ENCODE measurements at regions of chr16 and their contacts with region 1.

Region 1: DNA sequence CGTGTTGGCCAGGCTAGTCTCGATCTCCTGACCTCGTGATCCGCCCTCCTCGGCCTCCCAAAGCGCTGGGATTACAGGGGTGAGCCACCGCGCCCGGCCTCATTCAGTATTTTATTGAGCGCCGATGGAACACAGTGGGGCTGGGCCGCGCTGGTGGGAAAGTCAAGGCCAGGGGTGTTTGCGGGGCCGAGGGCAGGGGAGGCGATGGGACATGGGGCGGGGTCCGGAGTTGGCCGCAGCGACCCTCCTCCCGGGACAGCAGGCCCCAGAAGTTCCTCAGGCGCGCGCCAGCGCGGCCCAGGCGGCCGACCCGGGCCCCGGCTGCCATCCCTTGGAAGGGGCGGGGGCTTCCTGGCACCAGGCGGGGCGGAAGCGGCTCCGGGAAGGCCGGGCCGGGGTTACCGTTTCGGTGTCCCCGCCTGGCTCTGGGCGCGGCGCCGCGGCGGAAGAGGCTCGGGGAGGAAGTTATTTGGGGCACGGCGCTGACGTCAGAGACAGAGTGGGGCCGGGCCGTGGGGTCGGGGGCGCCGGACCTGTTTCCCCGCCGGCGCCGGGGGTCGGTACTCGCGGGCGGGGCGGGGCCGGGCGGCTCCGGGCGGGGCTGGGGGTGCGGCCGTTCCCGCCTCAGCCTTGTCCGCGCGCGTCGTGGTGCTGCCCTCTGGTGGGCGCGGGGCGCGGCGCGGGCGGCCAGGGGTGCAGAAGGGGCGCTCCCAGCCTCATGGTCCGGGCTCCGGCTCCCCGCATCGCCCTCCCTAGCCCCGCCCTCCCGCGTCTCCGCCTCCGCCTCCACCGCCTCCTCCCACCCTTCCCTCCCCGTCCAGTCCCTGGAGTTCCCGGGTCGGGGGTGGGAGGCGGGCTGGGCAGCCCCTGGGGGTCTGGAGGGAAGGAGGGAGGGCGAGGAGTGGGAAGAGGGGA is 952 bp upstream of the PRSS27 start:
- DNase-seq: peak; percentile 93
- H3K4me3 Mint-ChIP-seq: peak overlapping the region; percentile 75
- H3K27ac Mint-ChIP-seq: peak overlapping the region; percentile 67
- H3K4me1 Mint-ChIP-seq: peaks cover 2% of the 10 kb centered on the region
- H3K27me3 Mint-ChIP-seq: peaks cover 4% of the 10 kb centered on the region

Region 2: DNA sequence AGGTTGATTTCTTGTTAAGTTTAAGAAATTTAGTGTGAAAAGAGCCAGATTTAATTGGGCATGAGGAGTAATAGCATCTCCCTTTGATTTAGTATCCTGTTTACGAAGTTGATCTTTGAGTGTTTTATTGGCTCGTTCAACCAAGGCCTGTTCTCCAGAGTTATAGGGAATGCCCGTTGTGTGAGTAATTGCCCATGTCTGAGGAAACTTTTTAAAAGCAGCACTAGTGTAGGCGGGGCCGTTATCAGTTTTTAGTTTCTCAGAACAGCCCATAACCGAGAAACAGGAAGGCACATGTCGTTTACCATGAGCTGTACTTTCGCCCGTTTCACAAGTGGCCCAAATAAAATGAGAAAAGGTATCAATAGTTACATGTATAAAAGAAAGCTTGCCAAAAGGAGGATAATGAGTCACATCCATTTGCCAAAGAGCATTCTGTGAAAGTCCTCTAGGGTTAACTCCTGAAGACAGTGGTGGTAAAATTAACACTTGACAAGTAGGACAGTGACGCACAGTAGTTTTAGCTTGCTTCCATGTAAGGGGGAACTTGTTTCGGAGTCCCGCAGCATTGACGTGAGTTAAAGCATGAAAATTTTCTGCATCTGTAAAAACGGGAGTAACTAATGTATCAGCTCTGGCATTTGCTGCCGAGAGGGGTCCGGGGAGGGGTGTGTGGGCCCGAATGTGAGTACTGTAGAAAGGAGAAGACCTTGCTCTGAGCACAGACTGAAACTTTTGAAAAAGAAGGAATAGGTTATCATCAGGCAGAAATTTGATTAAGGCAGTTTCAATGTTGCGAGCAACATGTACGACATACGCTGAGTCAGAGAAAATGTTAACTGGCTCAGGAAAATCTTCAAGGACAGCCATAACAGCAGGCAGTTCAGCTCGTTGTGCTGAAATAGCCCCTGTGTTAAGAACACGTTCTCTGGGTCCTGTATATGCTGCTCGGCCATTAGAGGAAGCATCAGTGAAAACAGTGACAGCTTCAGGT is 57.1 kb before region 1 on chr16:
- CTCF ChIA-PET with region 1: no interaction called
- POLR2A ChIA-PET with region 1: interaction called, 3 read pairs
- intact Hi-C with region 1: loop called (anchors 10 kb)
- DNase-seq: peak; percentile 87
- H3K4me3 Mint-ChIP-seq: peak overlapping the region; percentile 88
- H3K27ac Mint-ChIP-seq: peak overlapping the region; percentile 98
- H3K4me1 Mint-ChIP-seq: peaks cover 79% of the 10 kb centered on the region
- H3K27me3 Mint-ChIP-seq: no peaks in the 10 kb centered on the region

Region 3: DNA sequence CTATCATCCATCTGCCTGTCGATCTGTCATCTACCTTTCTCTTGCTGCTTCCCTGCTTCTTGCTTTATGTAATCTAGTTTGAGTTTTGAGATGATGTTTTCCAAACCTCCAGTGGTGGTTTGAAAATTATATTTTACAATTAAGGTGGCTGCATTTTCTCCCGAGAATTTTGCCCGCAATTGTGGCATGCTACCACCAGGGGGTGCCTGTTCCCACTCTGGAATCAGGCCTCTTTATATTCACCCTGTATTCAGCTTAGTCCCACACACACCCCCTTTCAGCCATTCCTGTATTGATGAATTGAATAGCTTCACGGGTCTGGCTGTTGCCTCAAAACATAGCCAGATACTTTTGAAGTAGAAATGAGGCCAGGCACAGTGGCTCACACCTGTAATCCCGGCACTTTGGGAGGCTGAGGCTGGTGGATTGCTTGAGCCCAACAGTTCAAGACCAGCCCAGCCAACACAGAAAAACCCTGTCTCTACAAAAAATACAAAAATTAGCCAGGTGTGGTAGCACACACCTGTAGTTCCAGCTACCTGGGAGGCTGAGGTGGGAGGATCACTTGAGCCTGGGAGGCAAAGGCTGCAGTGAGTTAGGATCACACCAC is 133.8 kb after region 1 on chr16:
- CTCF ChIA-PET with region 1: no interaction called
- POLR2A ChIA-PET with region 1: no interaction called
- intact Hi-C with region 1: no loop called
- DNase-seq: peak; percentile 35
- H3K4me3 Mint-ChIP-seq: no peak overlapping the region
- H3K27ac Mint-ChIP-seq: no peak overlapping the region
- H3K4me1 Mint-ChIP-seq: peaks cover 5% of the 10 kb centered on the region
- H3K27me3 Mint-ChIP-seq: peaks cover 2% of the 10 kb centered on the region

Measured in activated CD4-positive, alpha-beta memory T cell treated with anti-CD3 and anti-CD28 coated beads for 36 hours (primary cell).